ENCODE measurements at regions of chr19 and their contacts with region 1.

Region 1: GRCh38 chr19:47256688-47257443 is 541 bp downstream of the CCDC9 start:
- DNase-seq: peak; percentile 100
- H3K4me3 ChIP-seq: peak overlapping the region; percentile 76
- H3K4me3 Mint-ChIP-seq: peak overlapping the region; percentile 92
- H3K27ac Mint-ChIP-seq: peak overlapping the region; percentile 96
- H3K4me1 ChIP-seq: peaks cover 22% of the 10 kb centered on the region
- H3K4me1 Mint-ChIP-seq: peaks cover 14% of the 10 kb centered on the region
- H3K27me3 ChIP-seq: no peaks in the 10 kb centered on the region
- H3K27me3 Mint-ChIP-seq: no peaks in the 10 kb centered on the region
- CTCF ChIP-seq: no peak

Region 2: DNA sequence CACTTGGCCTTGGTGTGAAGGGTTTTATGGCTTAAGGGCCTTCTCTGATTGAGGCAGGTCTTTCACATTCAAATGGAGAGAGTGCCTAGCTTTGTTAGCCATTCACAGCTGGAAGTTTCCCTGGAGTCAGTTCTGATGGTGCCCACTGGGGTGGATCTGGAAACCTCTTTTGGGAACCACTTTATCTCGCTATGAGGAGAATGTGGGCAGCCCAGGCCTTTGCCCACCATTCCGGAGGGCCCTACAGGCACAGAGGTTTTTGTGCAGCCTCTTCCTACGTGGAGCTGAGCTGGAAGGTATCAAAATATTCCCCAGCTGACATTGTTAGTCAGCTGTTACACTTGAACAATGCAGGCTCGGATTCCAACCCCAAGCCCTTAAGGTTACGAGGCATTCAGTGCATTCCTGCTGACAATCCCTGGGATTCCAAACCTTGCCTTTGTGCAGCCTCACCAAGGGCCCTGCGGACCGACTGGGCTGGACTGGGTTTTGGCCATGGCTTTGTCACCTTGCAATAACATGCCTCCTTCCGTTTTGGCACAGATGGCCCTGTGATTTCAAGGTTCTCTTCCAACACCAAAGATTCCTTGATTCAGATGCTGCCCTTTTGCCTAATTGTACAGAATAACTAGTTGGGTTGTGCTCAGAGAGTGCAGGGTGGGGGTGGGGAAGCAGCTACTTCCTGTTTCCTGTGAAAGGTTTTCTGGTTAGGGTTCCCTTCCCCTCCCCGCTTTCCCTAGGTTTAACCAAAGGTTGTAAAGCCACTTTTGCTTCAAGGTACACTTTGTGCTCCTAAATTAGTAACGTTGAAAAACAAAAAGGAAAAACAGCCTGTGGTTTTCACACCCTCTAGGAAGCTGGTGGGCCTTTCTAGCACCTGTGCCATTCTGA is 99.2 kb before region 1 on chr19:
- CTCF ChIA-PET with region 1: no interaction called
- POLR2A ChIA-PET with region 1: no interaction called
- intact Hi-C with region 1: no loop called
- DNase-seq: peak; percentile 42 to 45
- H3K4me3 ChIP-seq: no peak overlapping the region
- H3K4me3 Mint-ChIP-seq: no peak overlapping the region
- H3K27ac Mint-ChIP-seq: peak overlapping the region; percentile 91
- H3K4me1 ChIP-seq: peaks cover 22% of the 10 kb centered on the region
- H3K4me1 Mint-ChIP-seq: peaks cover 28% of the 10 kb centered on the region
- H3K27me3 ChIP-seq: no peaks in the 10 kb centered on the region
- H3K27me3 Mint-ChIP-seq: no peaks in the 10 kb centered on the region
- CTCF ChIP-seq: no peak

Region 3: GRCh38 chr19:47210689-47211316 is 46.1 kb before region 1 on chr19:
- CTCF ChIA-PET with region 1: interaction called, 11 read pairs
- POLR2A ChIA-PET with region 1: interaction called, 3 read pairs
- intact Hi-C with region 1: no loop called
- DNase-seq: peak; percentile 74 to 85
- H3K4me3 ChIP-seq: no peak overlapping the region
- H3K4me3 Mint-ChIP-seq: peak overlapping the region; percentile 42
- H3K27ac Mint-ChIP-seq: peak overlapping the region; percentile 94
- H3K4me1 ChIP-seq: no peaks in the 10 kb centered on the region
- H3K4me1 Mint-ChIP-seq: peaks cover 13% of the 10 kb centered on the region
- H3K27me3 ChIP-seq: no peaks in the 10 kb centered on the region
- H3K27me3 Mint-ChIP-seq: no peaks in the 10 kb centered on the region
- CTCF ChIP-seq: peak; percentile 83 to 85

Region 4: DNA sequence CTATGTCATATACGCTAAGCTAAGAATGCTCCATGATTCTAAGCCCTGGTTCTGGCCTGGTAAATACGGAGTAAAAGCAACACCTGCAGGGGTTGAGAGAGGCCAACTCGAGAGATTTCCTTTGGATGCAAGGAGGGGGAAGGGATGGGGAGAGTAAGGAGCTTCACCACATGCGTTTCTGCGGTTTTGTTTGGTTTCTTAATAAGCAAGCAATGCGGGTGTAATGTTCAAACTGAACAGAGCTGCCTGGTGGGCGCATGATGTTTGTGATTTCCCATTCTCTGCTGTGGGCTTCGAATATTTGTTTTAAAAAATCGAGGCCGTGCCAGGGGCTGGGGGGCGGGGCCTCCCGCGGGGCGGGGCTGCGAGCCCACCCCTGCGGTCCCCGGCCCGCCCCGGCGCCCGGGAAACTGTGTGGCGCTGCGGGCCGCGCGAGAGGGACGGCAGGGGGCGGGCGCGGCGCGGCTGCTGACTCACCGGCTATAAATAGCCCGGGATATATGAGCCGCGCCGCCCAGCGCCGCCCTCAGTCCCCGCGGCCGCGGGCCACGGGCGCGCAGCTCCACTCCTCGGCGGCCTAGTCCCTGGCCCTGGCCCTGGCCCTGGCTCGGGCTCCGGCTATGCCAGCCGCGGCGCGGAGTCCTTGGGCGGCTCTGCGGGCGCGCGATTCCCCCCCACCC is 31.0 kb before region 1 on chr19:
- CTCF ChIA-PET with region 1: interaction called, 7 read pairs
- POLR2A ChIA-PET with region 1: interaction called, 15 read pairs
- intact Hi-C with region 1: no loop called
- DNase-seq: peak; percentile 82 to 94
- H3K4me3 ChIP-seq: peak overlapping the region; percentile 61
- H3K4me3 Mint-ChIP-seq: no peak overlapping the region
- H3K27ac Mint-ChIP-seq: peak overlapping the region; percentile 81
- H3K4me1 ChIP-seq: peaks cover 32% of the 10 kb centered on the region
- H3K4me1 Mint-ChIP-seq: peaks cover 6% of the 10 kb centered on the region
- H3K27me3 ChIP-seq: no peaks in the 10 kb centered on the region
- H3K27me3 Mint-ChIP-seq: no peaks in the 10 kb centered on the region
- CTCF ChIP-seq: peak in 1 of 2 experiments; percentile 47

Region 5: GRCh38 chr19:47273313-47273977 is 16.6 kb after region 1 on chr19:
- CTCF ChIA-PET with region 1: interaction called, 14 read pairs
- POLR2A ChIA-PET with region 1: interaction called, 71 read pairs
- intact Hi-C with region 1: loop called (anchors 1 kb)
- DNase-seq: peak; percentile 98
- H3K4me3 ChIP-seq: peak overlapping the region; percentile 77
- H3K4me3 Mint-ChIP-seq: peak overlapping the region; percentile 93
- H3K27ac Mint-ChIP-seq: peak overlapping the region; percentile 94
- H3K4me1 ChIP-seq: peaks cover 9% of the 10 kb centered on the region; the same call in 1 of the 2 replicates
- H3K4me1 Mint-ChIP-seq: peaks cover 20% of the 10 kb centered on the region
- H3K27me3 ChIP-seq: no peaks in the 10 kb centered on the region
- H3K27me3 Mint-ChIP-seq: no peaks in the 10 kb centered on the region
- CTCF ChIP-seq: no peak

Region 6: DNA sequence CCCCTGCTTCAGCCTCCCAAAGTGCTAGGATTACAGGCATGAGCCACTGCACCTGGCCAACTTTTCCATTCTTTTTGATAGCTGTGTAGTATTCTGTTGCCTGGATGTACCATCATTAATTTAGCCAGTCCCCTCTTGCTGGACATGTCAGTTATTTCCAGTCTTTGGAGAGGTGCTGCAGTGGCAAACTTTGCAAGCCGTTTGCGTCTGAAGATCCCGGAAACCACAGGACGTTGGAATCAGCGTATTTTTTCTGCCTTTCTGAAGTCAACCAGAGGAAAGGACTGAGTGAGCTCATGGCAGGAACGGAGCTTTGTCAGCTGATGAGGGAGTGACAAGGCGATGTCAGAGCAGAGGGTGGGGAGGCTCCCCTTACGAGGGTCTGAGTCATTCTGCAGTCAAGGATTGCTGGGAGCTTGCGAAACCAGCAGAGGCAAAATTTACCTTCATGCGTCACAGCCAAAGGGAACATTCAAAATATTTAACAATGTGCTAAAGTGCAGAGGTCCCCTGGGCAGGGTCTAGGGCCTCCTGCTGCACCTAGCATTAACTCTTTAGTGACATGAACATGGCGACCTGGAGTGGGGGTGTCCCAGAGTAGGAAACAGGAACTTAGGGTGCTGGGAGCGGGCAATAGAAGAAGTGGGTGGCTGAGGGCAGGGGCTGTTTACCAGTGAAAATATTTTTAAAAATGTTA is 58.4 kb after region 1 on chr19:
- CTCF ChIA-PET with region 1: no interaction called
- POLR2A ChIA-PET with region 1: no interaction called
- intact Hi-C with region 1: no loop called
- DNase-seq: peak; percentile 91
- H3K4me3 ChIP-seq: no peak overlapping the region
- H3K4me3 Mint-ChIP-seq: peak overlapping the region; percentile 54
- H3K27ac Mint-ChIP-seq: peak overlapping the region; percentile 92
- H3K4me1 ChIP-seq: peaks cover 10% of the 10 kb centered on the region; the same call in 1 of the 2 replicates
- H3K4me1 Mint-ChIP-seq: peaks cover 23% of the 10 kb centered on the region
- H3K27me3 ChIP-seq: no peaks in the 10 kb centered on the region
- H3K27me3 Mint-ChIP-seq: no peaks in the 10 kb centered on the region
- CTCF ChIP-seq: no peak

Region 7: GRCh38 chr19:47341734-47342133 is 84.9 kb after region 1 on chr19:
- CTCF ChIA-PET with region 1: no interaction called
- POLR2A ChIA-PET with region 1: no interaction called
- intact Hi-C with region 1: no loop called
- DNase-seq: no peak
- H3K4me3 ChIP-seq: no peak overlapping the region
- H3K4me3 Mint-ChIP-seq: no peak overlapping the region
- H3K27ac Mint-ChIP-seq: no peak overlapping the region
- H3K4me1 ChIP-seq: no peaks in the 10 kb centered on the region
- H3K4me1 Mint-ChIP-seq: no peaks in the 10 kb centered on the region
- H3K27me3 ChIP-seq: no peaks in the 10 kb centered on the region
- H3K27me3 Mint-ChIP-seq: no peaks in the 10 kb centered on the region
- CTCF ChIP-seq: no peak